ENCODE measurements at regions of chr16 and their contacts with region 1.

Region 1: GRCh38 chr16:19086322-19087199 is 19.1 kb downstream of the COQ7 start:
- DNase-seq: no peak
- H3K4me3 ChIP-seq: peak overlapping the region; percentile 44 to 47
- H3K27ac ChIP-seq: no peak overlapping the region
- H3K4me1 ChIP-seq: peaks cover 14% of the 10 kb centered on the region
- H3K27me3 ChIP-seq: no peaks in the 10 kb centered on the region
- CTCF ChIP-seq: peak; percentile 85 to 99 (median 95)
- POLR2A ChIP-seq: no peak

Region 2: GRCh38 chr16:19179546-19180490 is 93.3 kb after region 1 on chr16:
- intact Hi-C with region 1: loop called (anchors 10 kb)
- DNase-seq: no peak
- H3K4me3 ChIP-seq: no peak overlapping the region
- H3K27ac ChIP-seq: no peak overlapping the region
- H3K4me1 ChIP-seq: peaks cover 8% of the 10 kb centered on the region
- H3K27me3 ChIP-seq: no peaks in the 10 kb centered on the region
- CTCF ChIP-seq: peak in 2 of 3 experiments; percentile 66 to 68
- POLR2A ChIP-seq: no peak

Region 3: GRCh38 chr16:19375561-19376158 is 289.1 kb after region 1 on chr16:
- intact Hi-C with region 1: loop called (anchors 5 kb)
- DNase-seq: no peak
- H3K4me3 ChIP-seq: no peak overlapping the region
- H3K27ac ChIP-seq: no peak overlapping the region
- H3K4me1 ChIP-seq: no peaks in the 10 kb centered on the region
- H3K27me3 ChIP-seq: no peaks in the 10 kb centered on the region
- CTCF ChIP-seq: peak; percentile 73 to 91 (median 82)
- POLR2A ChIP-seq: no peak

Region 4: GRCh38 chr16:19400697-19401096 is 314.1 kb after region 1 on chr16:
- intact Hi-C with region 1: no loop called
- DNase-seq: no peak
- H3K4me3 ChIP-seq: no peak overlapping the region
- H3K27ac ChIP-seq: no peak overlapping the region
- H3K4me1 ChIP-seq: no peaks in the 10 kb centered on the region
- H3K27me3 ChIP-seq: no peaks in the 10 kb centered on the region
- CTCF ChIP-seq: no peak
- POLR2A ChIP-seq: no peak

Region 5: DNA sequence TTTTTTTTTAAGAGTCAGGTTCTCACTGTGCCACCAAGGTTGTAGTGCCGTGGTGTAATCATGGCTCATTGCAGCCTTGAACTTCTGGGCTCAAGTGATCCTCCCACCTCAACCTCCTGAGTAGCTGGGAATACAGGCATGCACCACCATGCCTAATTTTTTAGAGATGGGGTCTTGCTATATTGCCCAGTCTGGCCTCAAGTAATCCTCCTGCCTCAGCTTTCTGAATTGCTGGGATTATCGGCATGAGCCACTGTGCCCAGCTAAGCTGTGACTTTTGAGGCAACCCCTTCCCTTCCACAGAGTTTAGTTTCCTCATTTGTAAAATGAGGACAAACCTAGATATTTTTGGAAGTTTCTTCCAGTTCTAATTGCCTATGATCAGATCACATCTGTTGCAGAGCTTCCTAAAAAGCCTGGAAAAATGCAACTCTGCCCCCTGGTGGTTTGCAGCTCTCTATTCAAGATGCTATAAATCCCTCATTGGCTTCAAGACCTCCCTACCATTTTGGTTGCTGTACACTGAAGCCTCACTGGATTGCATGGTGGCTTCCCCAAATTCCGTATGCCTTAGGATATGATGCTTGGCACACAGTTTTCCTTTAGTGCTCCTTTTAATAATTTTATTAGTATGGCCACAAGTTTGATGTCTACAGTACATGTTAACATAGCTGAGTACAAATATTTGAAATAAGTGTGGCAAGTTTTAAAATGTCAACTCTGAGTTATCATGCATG is 416.0 kb after region 1 on chr16:
- intact Hi-C with region 1: loop called (anchors 10 kb)
- DNase-seq: no peak
- H3K4me3 ChIP-seq: no peak overlapping the region
- H3K27ac ChIP-seq: no peak overlapping the region
- H3K4me1 ChIP-seq: no peaks in the 10 kb centered on the region
- H3K27me3 ChIP-seq: no peaks in the 10 kb centered on the region
- CTCF ChIP-seq: peak; percentile 45 to 62 (median 54)
- POLR2A ChIP-seq: no peak

Measured in vagina (tissue), 2 donors.